ENCODE measurements at regions of chr20 and their contacts with region 1.

Region 1: GRCh38 chr20:53915446-53916172 is 154.8 kb downstream of the BCAS1 start:
- DNase-seq: peak; percentile 89
- ATAC-seq: peak; percentile 84
- H3K4me3 ChIP-seq: peak overlapping the region; percentile 56
- H3K27ac ChIP-seq: peak overlapping the region; percentile 97
- H3K4me1 ChIP-seq: peaks cover 31% of the 10 kb centered on the region
- H3K27me3 ChIP-seq: no peaks in the 10 kb centered on the region
- CTCF ChIP-seq: peak; percentile 80 to 93 (median 90)
- EP300 ChIP-seq: no peak
- POLR2A ChIP-seq: peak; percentile 31; the same call in 1 of the 2 replicates
- RAD21 ChIP-seq: peak; percentile 94

Region 2: DNA sequence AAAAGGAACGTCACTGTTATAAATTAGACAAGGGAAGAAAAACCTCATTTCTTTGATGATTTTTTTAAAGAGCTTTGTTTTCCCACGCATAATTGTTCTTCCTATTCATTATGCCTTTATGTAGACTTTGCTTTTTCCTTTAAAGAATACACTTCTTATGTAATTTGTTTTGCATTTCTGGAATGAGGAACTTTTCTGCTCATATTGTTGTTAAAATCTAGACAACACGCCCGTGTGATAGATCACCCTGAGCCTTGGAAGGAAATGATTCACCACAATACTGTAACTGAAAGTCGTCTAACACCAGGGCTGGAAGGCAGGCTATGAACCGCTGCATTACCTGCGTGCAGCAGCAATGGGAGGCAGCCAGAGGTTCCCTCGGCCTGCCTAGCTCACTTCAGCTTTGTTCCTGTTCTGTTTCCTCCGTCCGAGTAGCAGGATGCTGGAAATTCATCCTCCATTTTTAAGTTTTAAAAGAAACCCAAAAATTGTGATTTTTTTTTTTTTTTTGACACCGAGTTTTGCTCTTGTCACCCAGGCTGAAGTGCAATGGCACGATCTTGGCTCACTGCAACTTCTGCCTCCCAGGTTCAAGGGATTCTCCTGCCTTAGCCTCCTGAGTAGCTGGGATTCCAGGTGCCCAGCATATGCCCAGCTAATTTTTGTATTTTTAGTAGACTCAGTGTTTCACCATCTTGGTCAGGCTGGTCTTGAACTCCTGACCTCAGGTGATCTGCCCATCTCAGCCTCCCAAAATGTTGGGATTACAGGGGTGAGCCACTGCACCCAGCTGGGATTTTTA is 272.4 kb before region 1 on chr20:
- CTCF ChIA-PET with region 1: interaction called, 3 read pairs
- POLR2A ChIA-PET with region 1: no interaction called
- RAD21 ChIA-PET with region 1: interaction called, 10 read pairs
- SMC1A ChIA-PET with region 1: interaction called, 4 read pairs
- in situ Hi-C with region 1: no loop called
- intact Hi-C with region 1: no loop called
- DNase-seq: peak; percentile 92
- ATAC-seq: peak; percentile 99
- H3K4me3 ChIP-seq: peak overlapping the region; percentile 37
- H3K27ac ChIP-seq: peak overlapping the region; percentile 88
- H3K4me1 ChIP-seq: peaks cover 15% of the 10 kb centered on the region
- H3K27me3 ChIP-seq: no peaks in the 10 kb centered on the region
- CTCF ChIP-seq: 0 out of 6 replicates have a peak, but pooled peaks of 1 of the 3 experiments have one; percentile 7
- EP300 ChIP-seq: peak; percentile 18 to 87; a peak in 3 of 4 replicates
- POLR2A ChIP-seq: peak; percentile 83
- RAD21 ChIP-seq: 0 out of 2 replicates have a peak, but pooled peaks have one; percentile 13

Region 3: DNA sequence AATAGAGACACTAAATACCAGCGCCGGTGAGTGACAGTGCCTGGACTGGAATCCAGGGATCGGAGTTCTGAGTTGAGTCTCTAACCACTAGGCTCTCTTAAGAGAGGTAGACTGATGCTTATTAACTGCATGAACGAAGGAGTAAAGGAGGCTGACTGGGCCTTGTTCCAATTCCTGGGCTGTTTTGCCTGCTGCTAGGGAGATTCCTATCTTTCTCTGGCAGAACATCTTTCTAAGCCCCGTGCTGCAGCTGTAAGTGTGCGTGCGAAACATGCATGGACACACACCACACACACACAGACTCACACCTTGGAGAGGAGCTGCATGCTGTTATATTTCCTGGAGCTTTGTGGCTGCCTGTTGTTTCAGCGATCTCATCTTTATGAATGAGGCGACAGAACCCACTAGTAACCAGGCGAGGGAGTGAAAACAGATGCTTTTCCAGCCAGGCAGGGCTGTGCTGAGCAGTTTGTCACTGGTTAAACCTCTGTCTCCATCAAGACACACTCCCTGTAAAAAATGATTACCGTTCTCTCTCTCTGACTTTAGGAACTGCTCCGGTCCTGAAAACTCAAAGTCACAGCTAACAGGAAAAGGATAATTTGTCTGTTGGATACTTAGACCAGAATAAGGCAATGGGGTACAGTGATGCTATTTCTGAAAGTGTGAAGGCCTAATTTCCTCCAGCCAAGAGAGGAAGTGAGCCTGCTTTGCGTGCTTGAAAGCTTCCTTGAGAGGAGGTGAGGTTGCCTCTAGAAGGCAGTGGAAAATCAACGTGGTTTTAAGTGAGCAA is 164.6 kb before region 1 on chr20:
- CTCF ChIA-PET with region 1: interaction called, 21 read pairs
- POLR2A ChIA-PET with region 1: interaction called, 5 read pairs
- RAD21 ChIA-PET with region 1: interaction called, 16 read pairs
- SMC1A ChIA-PET with region 1: interaction called, 91 read pairs
- in situ Hi-C with region 1: no loop called
- intact Hi-C with region 1: loop called (anchors 5 kb)
- DNase-seq: peak; percentile 69
- ATAC-seq: peak; percentile 83
- H3K4me3 ChIP-seq: peak overlapping the region; percentile 2; the same call in 1 of the 2 replicates
- H3K27ac ChIP-seq: peak overlapping the region; percentile 99
- H3K4me1 ChIP-seq: peaks cover 64% of the 10 kb centered on the region
- H3K27me3 ChIP-seq: no peaks in the 10 kb centered on the region
- CTCF ChIP-seq: no peak
- EP300 ChIP-seq: peak; percentile 56 to 89; a peak in 3 of 4 replicates
- POLR2A ChIP-seq: peak; percentile 45; the same call in 1 of the 2 replicates
- RAD21 ChIP-seq: peak; percentile 47

Region 4: DNA sequence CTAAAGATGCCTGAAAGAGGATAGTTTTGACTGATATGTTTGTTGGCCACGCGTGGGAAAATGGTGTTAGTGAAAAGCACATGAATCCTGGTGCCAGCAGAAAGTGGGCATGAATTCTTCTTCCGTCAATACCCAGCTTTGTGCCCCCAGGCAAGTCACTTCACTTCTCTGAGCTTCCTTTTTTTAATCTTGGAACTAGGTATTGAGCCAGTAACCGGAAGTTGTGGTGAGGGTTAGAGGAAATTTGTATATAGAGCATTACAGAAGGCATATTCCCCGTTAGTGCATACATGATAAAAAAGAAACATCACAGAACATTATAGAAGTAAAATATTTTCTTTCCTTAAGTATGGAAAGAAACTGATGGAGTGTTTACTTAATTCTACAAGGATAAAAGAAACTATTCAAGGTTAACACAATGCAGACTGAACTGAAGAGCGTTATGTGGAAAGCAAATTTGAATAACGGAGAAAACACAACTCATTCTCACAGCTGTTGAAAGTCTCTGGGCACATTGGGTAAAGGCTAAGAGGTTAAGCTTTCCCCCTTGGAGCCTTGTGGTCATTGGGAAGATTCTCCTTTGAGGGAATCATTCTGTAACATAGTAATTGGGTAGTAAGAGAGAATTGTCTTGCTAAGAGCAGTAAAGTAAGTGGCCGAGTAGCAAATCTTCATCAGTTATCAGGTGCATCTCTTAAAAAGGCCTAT is 68.3 kb before region 1 on chr20:
- CTCF ChIA-PET with region 1: interaction called, 4 read pairs
- POLR2A ChIA-PET with region 1: no interaction called
- RAD21 ChIA-PET with region 1: interaction called, 13 read pairs
- SMC1A ChIA-PET with region 1: interaction called, 10 read pairs
- in situ Hi-C with region 1: no loop called
- intact Hi-C with region 1: no loop called
- DNase-seq: no peak
- ATAC-seq: peak; percentile 58
- H3K4me3 ChIP-seq: no peak overlapping the region; the same call in 1 of the 2 replicates
- H3K27ac ChIP-seq: peak overlapping the region; percentile 79
- H3K4me1 ChIP-seq: peaks cover 26% of the 10 kb centered on the region
- H3K27me3 ChIP-seq: no peaks in the 10 kb centered on the region
- CTCF ChIP-seq: no peak
- EP300 ChIP-seq: no peak
- POLR2A ChIP-seq: no peak
- RAD21 ChIP-seq: no peak

Region 5: DNA sequence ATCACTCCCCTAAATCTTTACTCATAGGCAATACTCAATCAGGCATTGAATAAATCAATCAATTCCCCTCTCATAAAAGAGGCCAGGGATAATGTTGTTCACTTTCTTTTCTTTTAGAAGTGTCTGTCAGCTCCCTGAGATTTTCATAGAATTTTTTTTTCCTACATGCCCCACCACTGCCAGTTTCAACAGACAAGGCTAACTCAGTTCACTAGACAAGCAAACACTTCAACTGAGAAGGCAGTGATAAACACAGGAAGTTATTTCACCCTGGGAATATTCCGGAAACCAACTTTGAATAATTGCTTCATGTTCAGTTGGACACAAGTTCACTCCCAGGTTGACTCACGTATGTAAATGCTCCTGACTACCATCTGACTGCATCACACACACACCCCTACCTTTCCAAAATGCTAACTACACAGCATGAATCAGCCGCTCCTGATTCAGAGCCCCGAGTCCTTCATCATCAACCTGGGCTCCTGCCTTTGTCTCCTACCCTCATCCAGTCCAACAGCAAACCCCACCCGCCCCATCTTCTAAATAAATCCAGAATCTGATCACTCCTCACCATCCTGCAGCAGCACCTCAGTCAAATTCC is 10.9 kb after region 1 on chr20:
- CTCF ChIA-PET with region 1: interaction called, 258 read pairs
- POLR2A ChIA-PET with region 1: interaction called, 20 read pairs
- RAD21 ChIA-PET with region 1: interaction called, 394 read pairs
- SMC1A ChIA-PET with region 1: interaction called, 384 read pairs
- in situ Hi-C with region 1: no loop called
- intact Hi-C with region 1: no loop called
- DNase-seq: peak; percentile 99
- ATAC-seq: peak; percentile 80
- H3K4me3 ChIP-seq: peak overlapping the region; percentile 52
- H3K27ac ChIP-seq: peak overlapping the region; percentile 85
- H3K4me1 ChIP-seq: peaks cover 87% of the 10 kb centered on the region
- H3K27me3 ChIP-seq: no peaks in the 10 kb centered on the region
- CTCF ChIP-seq: no peak
- EP300 ChIP-seq: peak; percentile 80 to 82
- POLR2A ChIP-seq: peak; percentile 67
- RAD21 ChIP-seq: no peak

Region 6: DNA sequence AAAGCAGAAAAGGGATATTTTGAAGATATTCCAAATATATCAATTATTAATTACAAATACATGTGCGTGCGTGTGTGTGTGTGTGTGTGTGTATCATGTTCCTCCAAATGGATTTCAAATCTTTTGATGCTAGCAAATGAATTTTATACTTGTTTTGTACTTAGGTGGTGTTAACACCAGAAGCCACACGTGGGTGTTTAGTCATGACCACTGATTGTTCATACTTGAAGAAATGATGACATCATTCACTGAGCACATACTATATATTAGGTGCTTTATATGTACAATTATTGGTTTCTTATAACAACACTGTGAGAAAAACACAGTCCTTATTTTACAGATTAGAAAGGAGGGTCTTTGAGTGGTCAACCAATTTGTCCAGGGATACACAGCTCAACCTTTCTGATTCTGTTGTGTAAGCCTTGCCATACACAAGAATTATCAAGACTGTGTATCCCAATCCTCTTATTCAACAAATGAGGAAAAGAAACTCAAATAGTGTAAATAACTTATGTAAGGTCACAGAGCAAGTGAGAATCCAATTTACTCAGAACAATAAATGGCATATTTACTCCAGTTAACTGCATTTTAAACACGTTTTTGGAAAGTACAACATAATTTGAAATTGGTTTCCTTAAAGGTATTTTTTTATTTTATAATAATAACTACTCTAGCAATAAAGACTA is 66.3 kb after region 1 on chr20:
- CTCF ChIA-PET with region 1: no interaction called
- POLR2A ChIA-PET with region 1: no interaction called
- RAD21 ChIA-PET with region 1: no interaction called
- SMC1A ChIA-PET with region 1: no interaction called
- in situ Hi-C with region 1: no loop called
- intact Hi-C with region 1: no loop called
- DNase-seq: no peak
- ATAC-seq: peak; percentile 70
- H3K4me3 ChIP-seq: no peak overlapping the region
- H3K27ac ChIP-seq: no peak overlapping the region
- H3K4me1 ChIP-seq: no peaks in the 10 kb centered on the region
- H3K27me3 ChIP-seq: no peaks in the 10 kb centered on the region
- CTCF ChIP-seq: no peak
- EP300 ChIP-seq: no peak
- POLR2A ChIP-seq: no peak
- RAD21 ChIP-seq: no peak

Measured in GM12878 (cell line).